G401 (cell line): ENCODE measurements at regions of chr5 and their contacts with region 1.

Region 1: DNA sequence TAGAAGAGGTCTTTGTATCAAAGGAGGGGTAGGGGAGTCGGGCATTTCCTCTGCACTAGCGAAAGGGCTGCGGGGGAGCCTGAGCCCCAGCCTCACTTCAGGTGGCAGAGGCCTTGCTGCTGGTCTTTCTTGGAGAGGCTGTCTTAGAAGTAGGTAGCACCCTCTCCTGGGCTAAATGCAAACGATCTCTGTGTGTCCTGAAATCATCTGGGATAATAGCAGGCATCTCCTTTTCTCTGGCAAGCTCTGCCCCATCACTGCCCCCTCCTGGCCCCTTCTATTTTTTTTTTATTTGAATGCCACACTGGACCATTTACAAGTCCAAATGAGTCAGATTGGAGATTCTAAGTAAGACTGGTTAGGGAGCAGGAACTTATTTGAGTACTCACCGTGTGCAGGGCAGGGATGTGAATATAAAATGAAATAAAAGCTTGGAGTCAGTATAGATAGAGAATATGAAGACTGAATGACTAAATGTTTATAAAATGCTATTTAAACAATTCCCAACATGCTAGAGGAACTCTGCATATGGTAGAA is 137.1 kb downstream of the FGF1 start:
- DNase-seq: peak; percentile 93

Region 2: GRCh38 chr5:142167458-142167857 is 381.3 kb before region 1 on chr5:
- in situ Hi-C with region 1: loop called (anchors 10 kb)
- DNase-seq: no peak

Region 3: GRCh38 chr5:142334538-142334937 is 214.3 kb before region 1 on chr5:
- in situ Hi-C with region 1: loop called (anchors 10 kb)
- DNase-seq: no peak

Region 4: GRCh38 chr5:142364251-142365145 is 184.3 kb before region 1 on chr5:
- in situ Hi-C with region 1: loop called (anchors 10 kb)
- DNase-seq: peak; percentile 88

Region 5: GRCh38 chr5:142390334-142390733 is 158.5 kb before region 1 on chr5:
- in situ Hi-C with region 1: loop called (anchors 10 kb)
- DNase-seq: no peak